Transverse colon (tissue), 4 donors: ENCODE measurements at regions of chr10 and their contacts with region 1.

Region 1: GRCh38 chr10:74249865-74250264 is 98.8 kb downstream of the ADK start:
- DNase-seq: no peak
- H3K4me3 ChIP-seq: no peak overlapping the region
- H3K27ac ChIP-seq: no peak overlapping the region
- H3K4me1 ChIP-seq: peaks cover 0 to 5% (median 2%) of the 10 kb centered on the region in 4 donors
- H3K27me3 ChIP-seq: no peaks in the 10 kb centered on the region
- CTCF ChIP-seq: no peak
- EP300 ChIP-seq: no peak
- POLR2A ChIP-seq: no peak

Region 2: GRCh38 chr10:75111367-75111906 is 861.6 kb after region 1 on chr10 and contains the start of gene SAMD8:
- in situ Hi-C with region 1: no loop called
- intact Hi-C with region 1: loop called (anchors 5 kb)
- DNase-seq: peak; percentile 97
- H3K4me3 ChIP-seq: peak within 1 kb of the TSS; percentile 48 to 97 (median 80)
- H3K27ac ChIP-seq: peak within 1 kb of the TSS; percentile 97 to 99 (median 98)
- H3K4me1 ChIP-seq: peaks cover 7 to 26% (median 11%) of the 10 kb centered on the region in 4 donors
- H3K27me3 ChIP-seq: no peaks in the 10 kb centered on the region
- CTCF ChIP-seq: peak; percentile 29 to 58 (median 34)
- EP300 ChIP-seq: no peak
- POLR2A ChIP-seq: peak; percentile 97
- total RNA-seq, gene SAMD8: 4.6 to 26.6 (median 17.7) TPM